GM10248 (cell line): ENCODE measurements at regions of chr17 and their contacts with region 1.

Region 1: DNA sequence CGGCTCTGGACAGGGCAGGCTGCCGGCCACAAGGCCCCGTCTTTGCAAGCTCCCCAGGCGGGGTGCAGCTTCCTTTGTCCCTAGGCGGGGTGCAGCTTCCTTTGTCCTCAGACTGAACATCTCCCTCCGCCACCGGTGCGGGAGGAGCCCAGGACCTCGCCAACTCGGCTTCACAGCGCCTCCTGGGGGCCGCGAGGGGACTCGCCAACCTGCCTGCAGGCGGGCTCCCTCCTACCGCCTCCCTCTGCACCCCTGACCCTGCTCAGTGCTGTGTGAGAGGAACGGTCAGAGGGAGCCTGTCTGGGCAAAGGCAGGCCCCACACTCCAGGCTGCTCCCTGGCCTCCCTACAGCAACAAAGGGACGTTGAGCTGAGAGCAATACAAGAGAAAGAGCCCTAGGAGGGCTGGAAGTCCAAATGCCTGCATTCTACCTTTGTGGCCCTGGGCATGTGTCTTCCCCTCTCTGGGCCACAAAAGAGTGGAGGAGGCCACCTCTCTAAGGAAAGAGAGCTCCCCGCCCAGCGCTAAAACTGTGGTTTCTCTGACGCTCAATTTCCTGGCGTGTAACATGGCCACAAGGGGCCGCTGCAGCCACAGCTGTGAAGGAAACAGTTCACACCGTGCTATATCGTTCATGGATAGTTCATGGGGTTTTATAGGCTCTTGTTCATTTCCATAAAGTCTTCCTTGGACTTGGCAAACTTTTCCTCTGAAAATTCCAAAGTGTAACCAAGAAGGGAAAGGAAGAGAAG is 20.9 kb upstream of the KRT19 start:
- DNase-seq: peak; percentile 83
- CTCF ChIP-seq: peak; percentile 97

Region 2: GRCh38 chr17:40615295-40615988 is 933.6 kb before region 1 on chr17:
- CTCF ChIA-PET with region 1: interaction called, 19 read pairs
- POLR2A ChIA-PET with region 1: no interaction called
- DNase-seq: peak; percentile 81
- CTCF ChIP-seq: peak; percentile 61

Region 3: GRCh38 chr17:40909351-40909750 is 639.7 kb before region 1 on chr17:
- CTCF ChIA-PET with region 1: interaction called, 37 read pairs
- POLR2A ChIA-PET with region 1: no interaction called
- DNase-seq: peak; percentile 67
- CTCF ChIP-seq: peak; percentile 62

Region 4: DNA sequence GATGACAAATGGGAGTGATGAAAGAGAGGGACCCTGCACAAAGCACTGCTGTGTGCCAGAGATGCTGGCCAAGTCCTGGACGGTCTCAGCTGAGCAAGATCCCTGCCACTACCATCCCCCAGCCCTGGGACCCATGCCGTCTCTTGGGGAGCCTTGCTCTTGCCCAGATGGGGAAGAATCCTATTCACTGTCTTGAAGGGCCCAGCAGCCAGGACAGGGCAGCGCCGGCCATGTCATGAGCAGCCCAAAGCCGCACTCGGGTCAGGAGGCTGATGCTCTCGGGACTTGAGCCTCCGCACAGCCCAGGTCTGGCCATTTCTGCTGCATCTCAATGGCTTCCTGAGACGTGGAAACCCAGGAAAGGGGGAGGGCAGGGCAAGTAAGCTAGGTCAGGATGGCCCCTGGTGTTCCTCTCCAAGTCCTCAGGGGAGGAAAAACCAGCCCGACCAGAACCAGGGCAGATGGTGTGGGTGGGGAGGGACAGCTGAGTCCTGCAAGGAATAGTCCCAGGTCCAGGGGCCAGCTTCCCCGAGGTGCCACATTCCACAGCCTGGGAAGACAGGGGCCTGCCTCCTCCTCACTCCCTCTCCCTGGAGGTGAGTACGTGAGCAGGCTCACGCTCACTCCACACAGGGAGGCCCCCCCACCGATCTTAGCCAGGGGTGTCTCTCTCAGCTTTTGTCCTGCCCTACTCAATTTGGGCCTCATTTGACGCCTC is 13.1 kb before region 1 on chr17:
- CTCF ChIA-PET with region 1: interaction called, 31 read pairs
- POLR2A ChIA-PET with region 1: no interaction called
- DNase-seq: no peak
- CTCF ChIP-seq: no peak

Region 5: DNA sequence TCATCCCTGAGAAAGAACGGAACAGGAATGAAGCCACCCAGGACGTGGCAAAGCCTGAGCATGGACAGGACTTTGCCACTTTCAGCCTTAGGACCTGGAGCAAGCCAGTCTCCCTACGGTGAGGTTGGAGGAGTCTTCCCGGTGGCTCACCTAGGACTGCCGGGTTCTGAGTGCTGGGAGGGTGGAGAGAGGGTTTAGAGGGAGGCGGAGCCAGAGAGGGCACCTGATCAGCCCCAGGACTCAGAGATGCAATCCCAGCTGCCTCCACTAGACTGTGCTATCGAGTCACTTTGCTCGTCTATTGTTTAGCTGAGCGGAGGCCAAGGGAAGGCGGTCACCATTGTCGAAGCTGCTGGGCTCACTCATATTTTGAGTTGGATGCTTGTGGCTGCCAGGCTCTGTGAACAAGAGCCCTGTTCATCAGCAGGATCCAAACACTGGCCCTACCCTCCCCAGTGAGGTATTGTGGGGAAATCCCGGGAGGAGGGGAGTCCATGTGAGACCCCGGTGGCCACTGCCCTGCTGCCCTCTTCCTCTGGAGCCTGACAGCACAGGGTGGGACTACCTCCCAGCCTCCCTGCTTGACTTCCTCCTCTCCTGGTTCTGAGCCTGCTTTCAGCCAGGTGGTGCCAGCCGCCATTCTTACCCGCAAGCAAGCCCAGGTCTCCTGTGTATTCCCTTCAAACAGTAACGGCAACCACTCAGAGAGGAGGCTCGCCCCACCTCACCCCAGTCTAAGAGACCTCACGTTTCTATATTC is 30.6 kb after region 1 on chr17:
- CTCF ChIA-PET with region 1: interaction called, 12 read pairs
- POLR2A ChIA-PET with region 1: no interaction called
- DNase-seq: peak; percentile 87
- CTCF ChIP-seq: peak; percentile 48

Region 6: DNA sequence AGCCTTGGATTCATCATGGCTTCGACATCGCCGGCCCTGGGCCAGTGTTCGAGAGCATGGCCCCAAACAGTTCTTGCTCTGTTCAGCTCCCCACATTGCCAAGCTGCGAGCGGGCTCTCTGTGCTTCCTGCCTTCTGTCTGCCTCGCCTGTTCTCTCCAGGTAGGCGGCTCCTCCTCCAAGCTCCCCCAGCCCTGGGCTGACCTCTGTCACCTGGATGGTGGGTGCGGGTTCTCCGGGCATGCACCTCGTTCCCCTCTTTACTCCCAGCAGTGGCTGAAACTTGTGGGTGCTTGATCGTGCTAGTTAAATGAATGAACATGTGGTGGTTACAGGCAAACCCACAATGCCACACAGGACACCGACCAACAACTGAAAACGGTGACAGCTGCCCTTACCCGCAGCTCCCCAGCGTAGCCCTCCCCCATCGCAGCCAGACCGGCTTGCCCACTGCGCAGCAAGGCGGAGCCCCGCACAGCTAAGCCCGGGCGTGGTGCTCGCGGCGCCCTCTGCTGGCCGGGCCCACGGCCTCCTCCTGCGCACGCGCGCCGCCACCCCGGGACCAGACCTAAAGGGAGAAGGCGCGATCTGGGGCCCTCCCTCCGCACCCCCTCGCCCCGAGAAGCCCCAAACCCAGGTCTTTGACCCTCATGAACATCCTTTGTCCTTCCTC is 116.7 kb after region 1 on chr17:
- CTCF ChIA-PET with region 1: interaction called, 107 read pairs
- POLR2A ChIA-PET with region 1: no interaction called
- DNase-seq: peak; percentile 93
- CTCF ChIP-seq: peak; percentile 95